WTC11 (cell line): ENCODE measurements at regions of chr1 and their contacts with region 1.

Region 1: GRCh38 chr1:11661103-11661502 is 2.9 kb upstream of the FBXO6 start:
- DNase-seq: no peak
- ATAC-seq: no peak
- H3K4me3 Mint-ChIP-seq: no peak overlapping the region
- H3K27ac Mint-ChIP-seq: no peak overlapping the region
- H3K4me1 Mint-ChIP-seq: no peaks in the 10 kb centered on the region
- H3K27me3 Mint-ChIP-seq: no peaks in the 10 kb centered on the region; the same call in 1 of the 2 replicates
- CTCF ChIP-seq: no peak

Region 2: GRCh38 chr1:10745886-10746455 is 915.1 kb before region 1 on chr1:
- CTCF ChIA-PET with region 1: no interaction called
- POLR2A ChIA-PET with region 1: no interaction called
- DNase-seq: no peak
- ATAC-seq: no peak
- H3K4me3 Mint-ChIP-seq: no peak overlapping the region
- H3K27ac Mint-ChIP-seq: peak overlapping the region; percentile 24
- H3K4me1 Mint-ChIP-seq: peaks cover 16% of the 10 kb centered on the region
- H3K27me3 Mint-ChIP-seq: no peaks in the 10 kb centered on the region
- CTCF ChIP-seq: no peak

Region 3: DNA sequence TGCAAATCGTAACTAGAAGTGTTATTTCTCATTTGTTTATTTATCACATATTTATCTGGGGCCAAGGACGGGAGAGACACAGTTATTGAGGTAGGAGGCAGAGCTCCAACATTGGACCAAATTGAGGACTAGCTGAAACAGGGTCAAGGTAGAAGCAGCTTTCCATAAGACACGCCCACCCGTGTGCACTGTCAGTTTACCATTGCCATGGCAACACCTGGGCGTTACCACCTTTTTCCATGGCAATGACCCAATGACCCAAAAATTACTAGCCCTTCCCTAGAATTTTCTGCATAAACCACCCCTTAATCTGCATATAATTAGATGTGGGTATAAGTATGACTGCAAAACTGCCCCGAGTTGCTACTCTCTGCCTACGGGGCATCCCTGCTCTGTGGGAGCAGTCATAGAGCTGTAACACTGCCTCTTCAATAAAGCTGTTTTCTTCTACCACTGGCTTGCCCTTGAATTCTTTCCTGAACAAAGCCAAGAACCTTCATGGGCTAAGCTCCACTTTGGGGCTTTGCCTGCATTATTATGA is 79.6 kb before region 1 on chr1:
- CTCF ChIA-PET with region 1: no interaction called
- POLR2A ChIA-PET with region 1: no interaction called
- DNase-seq: no peak
- ATAC-seq: no peak
- H3K4me3 Mint-ChIP-seq: no peak overlapping the region
- H3K27ac Mint-ChIP-seq: no peak overlapping the region
- H3K4me1 Mint-ChIP-seq: no peaks in the 10 kb centered on the region
- H3K27me3 Mint-ChIP-seq: peaks cover 1% of the 10 kb centered on the region; the same call in 1 of the 2 replicates
- CTCF ChIP-seq: no peak

Region 4: GRCh38 chr1:11693024-11693590 is 32.0 kb after region 1 on chr1:
- CTCF ChIA-PET with region 1: interaction called, 25 read pairs
- POLR2A ChIA-PET with region 1: interaction called, 27 read pairs
- DNase-seq: no peak
- ATAC-seq: no peak
- H3K4me3 Mint-ChIP-seq: peak overlapping the region; percentile 89
- H3K27ac Mint-ChIP-seq: 0 out of 2 replicates have a peak overlapping the region, but pooled peaks have one; percentile 0
- H3K4me1 Mint-ChIP-seq: peaks cover 55% of the 10 kb centered on the region
- H3K27me3 Mint-ChIP-seq: no peaks in the 10 kb centered on the region
- CTCF ChIP-seq: no peak

Region 5: DNA sequence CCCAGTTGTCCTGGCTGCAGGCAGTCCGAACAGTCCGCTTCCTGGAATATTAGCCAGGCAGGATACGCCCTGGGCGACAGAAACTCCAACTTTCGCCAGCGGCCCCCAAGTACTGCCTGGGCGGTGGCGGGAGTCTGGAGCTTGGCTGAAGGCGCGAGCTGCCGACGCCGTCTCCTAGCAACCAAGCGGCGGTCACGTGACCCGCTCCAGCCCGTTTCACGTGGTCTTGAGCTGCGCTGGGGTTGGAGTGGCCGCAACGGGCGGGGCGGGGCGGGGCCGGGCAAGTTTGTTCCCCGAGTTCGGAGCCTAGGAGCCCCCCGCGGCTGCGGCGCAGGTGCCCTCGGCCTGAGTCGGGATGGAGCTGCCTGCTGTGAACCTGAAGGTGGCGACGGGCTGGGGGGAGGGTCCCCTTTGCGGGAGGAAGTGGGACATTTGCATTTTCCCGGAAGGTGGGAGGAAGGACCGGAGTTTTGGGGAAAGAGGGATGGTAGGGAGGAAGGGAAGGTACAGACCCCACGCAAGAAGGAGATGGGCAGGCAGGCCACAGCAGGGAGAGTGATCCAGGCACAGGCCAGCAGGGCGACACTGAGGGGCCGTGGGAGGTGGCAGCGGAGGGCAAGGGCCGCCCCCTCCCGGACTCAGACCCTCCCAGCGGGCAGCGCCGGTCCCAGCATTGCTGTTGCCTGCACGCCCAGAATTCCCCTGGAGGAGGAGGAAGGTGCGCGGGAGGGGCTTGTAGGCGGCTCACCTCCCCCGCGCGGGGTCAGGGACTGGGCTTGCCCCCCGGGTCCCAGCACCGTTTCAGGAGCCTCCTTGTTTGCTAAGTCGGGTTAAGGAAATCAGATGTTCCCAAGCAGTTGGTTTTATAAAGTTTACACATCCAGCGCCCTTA is 75.0 kb after region 1 on chr1 and contains the start of gene AGTRAP:
- CTCF ChIA-PET with region 1: interaction called, 17 read pairs
- POLR2A ChIA-PET with region 1: interaction called, 3 read pairs
- DNase-seq: peak; percentile 98
- ATAC-seq: peak; percentile 73
- H3K4me3 Mint-ChIP-seq: peak within 1 kb of the TSS; percentile 94
- H3K27ac Mint-ChIP-seq: peak within 1 kb of the TSS; percentile 93
- H3K4me1 Mint-ChIP-seq: peaks cover 47% of the 10 kb centered on the region
- H3K27me3 Mint-ChIP-seq: no peaks in the 10 kb centered on the region; the same call in 1 of the 2 replicates
- CTCF ChIP-seq: no peak
- total RNA-seq, gene AGTRAP: 81.6 to 102 TPM (median 101 TPM) in 3 replicates